ENCODE measurements at regions of chr22 and their contacts with region 1.

Region 1: GRCh38 chr22:35785181-35785923 is 67.7 kb downstream of the APOL5 start:
- DNase-seq: peak; percentile 10
- H3K4me3 ChIP-seq: no peak overlapping the region
- H3K27ac ChIP-seq: no peak overlapping the region
- H3K4me1 ChIP-seq: peaks cover 27% of the 10 kb centered on the region
- H3K27me3 ChIP-seq: no peaks in the 10 kb centered on the region
- CTCF ChIP-seq: no peak

Region 2: GRCh38 chr22:35749808-35750207 is 35.5 kb before region 1 on chr22:
- CTCF ChIA-PET with region 1: no interaction called
- dilution Hi-C with region 1: no loop called
- in situ Hi-C with region 1: no loop called
- intact Hi-C with region 1: no loop called
- DNase-seq: no peak
- H3K4me3 ChIP-seq: no peak overlapping the region
- H3K27ac ChIP-seq: no peak overlapping the region
- H3K4me1 ChIP-seq: no peaks in the 10 kb centered on the region
- H3K27me3 ChIP-seq: no peaks in the 10 kb centered on the region
- CTCF ChIP-seq: no peak

Region 3: GRCh38 chr22:35866651-35867050 is 81.3 kb after region 1 on chr22:
- CTCF ChIA-PET with region 1: no interaction called
- dilution Hi-C with region 1: loop called (anchors 5 kb)
- in situ Hi-C with region 1: no loop called
- intact Hi-C with region 1: no loop called
- DNase-seq: no peak
- H3K4me3 ChIP-seq: no peak overlapping the region
- H3K27ac ChIP-seq: no peak overlapping the region
- H3K4me1 ChIP-seq: peaks cover 10% of the 10 kb centered on the region
- H3K27me3 ChIP-seq: no peaks in the 10 kb centered on the region
- CTCF ChIP-seq: no peak

Measured in mammary epithelial cell (primary cell).